MCF 10A (cell line): ENCODE measurements at regions of chr21 and their contacts with region 1.

Region 1: DNA sequence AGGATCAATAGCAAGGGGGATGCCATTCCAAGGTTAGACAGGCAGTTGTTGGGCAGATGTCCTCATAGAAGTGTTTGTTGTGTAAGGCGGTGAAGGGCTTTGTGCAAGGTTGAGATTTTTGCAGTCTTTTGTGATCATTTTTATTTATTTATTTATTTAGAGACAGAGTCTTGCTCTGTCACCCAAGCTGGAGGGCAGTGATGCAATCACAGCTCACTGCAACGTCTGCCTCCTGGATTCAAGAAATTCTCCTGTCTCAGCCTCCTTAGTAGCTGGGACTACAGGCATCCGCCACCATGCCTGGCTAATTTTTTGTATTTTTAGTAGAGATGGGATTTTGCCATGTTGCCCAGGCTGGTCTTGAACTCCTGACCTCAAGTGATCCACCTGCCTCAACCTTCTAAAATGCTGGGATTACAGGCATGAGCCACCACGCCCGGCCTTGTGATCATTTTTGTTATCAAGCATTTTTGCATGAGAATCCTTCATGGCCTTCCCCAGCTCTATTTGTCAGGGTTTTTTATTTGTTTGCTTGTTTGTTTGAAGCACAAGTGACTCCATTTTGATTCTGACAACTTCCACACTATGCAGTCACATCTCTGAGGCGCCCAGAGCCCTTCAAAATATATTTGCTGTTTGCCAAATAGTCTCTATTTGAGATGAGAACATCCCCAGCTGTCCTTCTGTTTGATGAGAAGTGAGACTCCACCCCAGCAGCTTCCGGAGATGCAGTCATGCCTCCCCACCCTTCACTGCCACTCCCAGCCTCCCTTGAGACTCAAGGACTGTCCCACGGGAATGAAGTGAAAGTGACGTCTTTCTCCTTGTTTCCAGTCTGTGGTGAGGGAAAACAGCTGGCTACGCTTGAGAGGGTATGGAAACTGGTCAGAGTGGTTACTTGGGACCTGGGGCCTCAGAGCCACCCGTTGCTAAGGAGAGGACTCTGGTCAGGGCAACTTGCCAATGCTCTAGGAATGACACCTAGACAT is 38.0 kb downstream of the TMEM50B start:
- DNase-seq: peak; percentile 92
- H3K4me3 Mint-ChIP-seq: peak overlapping the region; percentile 7
- H3K27ac Mint-ChIP-seq: peak overlapping the region; percentile 85
- H3K4me1 Mint-ChIP-seq: peaks cover 16% of the 10 kb centered on the region
- H3K27me3 Mint-ChIP-seq: no peaks in the 10 kb centered on the region
- CTCF ChIP-seq: no peak

Region 2: DNA sequence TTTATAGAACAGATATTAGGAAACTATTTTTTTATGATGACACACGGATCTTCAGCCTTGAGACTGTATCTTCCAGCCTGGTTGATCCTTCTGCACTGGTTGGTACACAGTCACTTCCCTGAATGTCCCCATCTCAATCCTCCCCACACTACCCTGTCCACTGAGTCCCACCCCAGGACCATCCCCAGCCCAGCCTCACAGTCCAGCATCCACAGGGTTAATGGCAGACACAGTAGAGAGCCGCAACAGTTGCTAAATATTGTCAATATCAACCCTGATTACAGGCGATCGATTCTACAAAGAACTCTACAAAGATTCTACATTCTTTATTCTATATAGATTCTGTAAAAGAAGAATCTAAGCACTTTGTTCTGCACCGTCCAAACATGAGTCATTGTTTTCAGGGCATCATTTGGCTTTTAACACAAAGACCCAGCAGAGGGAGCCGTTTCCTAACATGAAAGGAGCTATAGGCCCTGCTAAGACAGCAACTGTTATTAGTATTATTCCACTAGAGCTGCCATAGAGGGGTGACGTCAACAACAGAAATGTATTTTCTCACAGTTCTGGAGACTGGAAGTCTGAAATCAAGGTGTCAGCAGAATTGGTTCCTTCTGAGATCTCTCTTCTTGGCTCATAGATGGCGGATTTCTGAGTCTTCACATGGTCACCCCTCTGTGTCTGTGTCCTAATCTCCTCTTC is 242.1 kb before region 1 on chr21:
- CTCF ChIA-PET with region 1: interaction called, 28 read pairs
- POLR2A ChIA-PET with region 1: interaction called, 10 read pairs
- intact Hi-C with region 1: loop called (anchors 1 kb)
- DNase-seq: peak; percentile 96
- H3K4me3 Mint-ChIP-seq: no peak overlapping the region
- H3K27ac Mint-ChIP-seq: no peak overlapping the region
- H3K4me1 Mint-ChIP-seq: peaks cover 20% of the 10 kb centered on the region
- H3K27me3 Mint-ChIP-seq: peaks cover 20% of the 10 kb centered on the region
- CTCF ChIP-seq: peak; percentile 76

Region 3: GRCh38 chr21:33348706-33349105 is 93.1 kb before region 1 on chr21:
- CTCF ChIA-PET with region 1: interaction called, 14 read pairs
- POLR2A ChIA-PET with region 1: interaction called, 4 read pairs
- intact Hi-C with region 1: no loop called
- DNase-seq: no peak
- H3K4me3 Mint-ChIP-seq: no peak overlapping the region
- H3K27ac Mint-ChIP-seq: no peak overlapping the region
- H3K4me1 Mint-ChIP-seq: no peaks in the 10 kb centered on the region
- H3K27me3 Mint-ChIP-seq: no peaks in the 10 kb centered on the region
- CTCF ChIP-seq: no peak

Region 4: DNA sequence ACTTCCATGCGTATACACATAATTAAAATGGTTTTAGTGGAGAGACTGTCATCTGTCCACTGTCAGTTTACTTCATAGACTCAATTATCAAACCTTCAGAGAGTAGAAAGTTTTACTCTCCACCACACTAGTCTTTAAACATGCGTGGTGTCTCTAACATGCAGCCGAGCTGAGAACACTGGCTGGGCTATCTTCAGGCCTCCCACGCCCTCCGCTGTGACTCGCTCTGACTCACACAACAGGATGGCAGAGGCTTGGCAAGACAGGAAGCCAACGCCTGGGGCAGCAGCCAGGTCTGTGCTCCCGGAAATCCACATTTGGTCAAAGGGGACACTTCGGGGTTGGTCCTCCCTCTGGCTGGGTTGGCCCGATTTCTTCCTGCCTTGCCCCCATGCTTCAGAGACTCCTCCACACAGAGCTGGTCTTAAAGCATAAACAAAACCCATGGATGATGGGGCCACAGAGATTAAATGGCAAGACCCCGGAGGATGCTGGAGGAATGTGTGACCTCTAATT is 61.2 kb before region 1 on chr21:
- CTCF ChIA-PET with region 1: interaction called, 9 read pairs
- POLR2A ChIA-PET with region 1: interaction called, 8 read pairs
- intact Hi-C with region 1: loop called (anchors 5 kb)
- DNase-seq: peak; percentile 99
- H3K4me3 Mint-ChIP-seq: peak overlapping the region; percentile 38
- H3K27ac Mint-ChIP-seq: peak overlapping the region; percentile 88
- H3K4me1 Mint-ChIP-seq: peaks cover 42% of the 10 kb centered on the region
- H3K27me3 Mint-ChIP-seq: no peaks in the 10 kb centered on the region
- CTCF ChIP-seq: no peak

Region 5: DNA sequence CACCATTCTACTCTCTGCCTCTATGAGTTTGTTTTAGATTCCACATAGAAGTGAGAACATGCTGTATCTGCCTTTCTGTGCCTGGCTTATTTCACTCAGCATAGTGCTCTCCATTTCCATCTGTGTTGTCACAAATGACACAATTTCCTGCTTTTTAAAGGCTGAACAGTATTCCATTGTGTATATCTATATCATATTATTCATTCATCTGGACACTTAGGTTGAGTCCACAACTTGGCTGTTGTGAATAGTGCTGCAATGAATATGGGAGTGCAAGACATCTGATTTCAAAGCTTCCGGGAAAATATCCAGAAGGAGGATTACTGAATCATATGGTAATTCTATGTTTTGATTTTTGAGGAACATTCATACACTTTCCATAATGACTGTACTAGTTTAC is 166.8 kb after region 1 on chr21:
- CTCF ChIA-PET with region 1: no interaction called
- POLR2A ChIA-PET with region 1: no interaction called
- intact Hi-C with region 1: loop called (anchors 1 kb)
- DNase-seq: no peak
- H3K4me3 Mint-ChIP-seq: no peak overlapping the region
- H3K27ac Mint-ChIP-seq: peak overlapping the region; percentile 41
- H3K4me1 Mint-ChIP-seq: no peaks in the 10 kb centered on the region
- H3K27me3 Mint-ChIP-seq: no peaks in the 10 kb centered on the region
- CTCF ChIP-seq: no peak

Region 6: GRCh38 chr21:33976082-33977016 is 534.6 kb after region 1 on chr21:
- CTCF ChIA-PET with region 1: no interaction called
- POLR2A ChIA-PET with region 1: no interaction called
- intact Hi-C with region 1: no loop called
- DNase-seq: peak; percentile 92
- H3K4me3 Mint-ChIP-seq: peak overlapping the region; percentile 60
- H3K27ac Mint-ChIP-seq: peak overlapping the region; percentile 98
- H3K4me1 Mint-ChIP-seq: peaks cover 41% of the 10 kb centered on the region
- H3K27me3 Mint-ChIP-seq: no peaks in the 10 kb centered on the region
- CTCF ChIP-seq: no peak